Gastrocnemius medialis (tissue), 4 donors: ENCODE measurements at regions of chr2 and their contacts with region 1.

Region 1: GRCh38 chr2:72887754-72888437 is 688 bp downstream of the SPR start:
- DNase-seq: peak; percentile 75 to 88
- ATAC-seq: peak; percentile 85 to 87
- H3K4me3 ChIP-seq: peak overlapping the region; percentile 60 to 88 (median 76)
- H3K27ac ChIP-seq: peak overlapping the region; percentile 82 to 96 (median 89)
- H3K4me1 ChIP-seq: peaks cover 12 to 33% of the 10 kb centered on the region in 2 donors
- H3K27me3 ChIP-seq: no peaks in the 10 kb centered on the region
- CTCF ChIP-seq: peak; percentile 77 to 94 (median 83)
- POLR2A ChIP-seq: no peak

Region 2: DNA sequence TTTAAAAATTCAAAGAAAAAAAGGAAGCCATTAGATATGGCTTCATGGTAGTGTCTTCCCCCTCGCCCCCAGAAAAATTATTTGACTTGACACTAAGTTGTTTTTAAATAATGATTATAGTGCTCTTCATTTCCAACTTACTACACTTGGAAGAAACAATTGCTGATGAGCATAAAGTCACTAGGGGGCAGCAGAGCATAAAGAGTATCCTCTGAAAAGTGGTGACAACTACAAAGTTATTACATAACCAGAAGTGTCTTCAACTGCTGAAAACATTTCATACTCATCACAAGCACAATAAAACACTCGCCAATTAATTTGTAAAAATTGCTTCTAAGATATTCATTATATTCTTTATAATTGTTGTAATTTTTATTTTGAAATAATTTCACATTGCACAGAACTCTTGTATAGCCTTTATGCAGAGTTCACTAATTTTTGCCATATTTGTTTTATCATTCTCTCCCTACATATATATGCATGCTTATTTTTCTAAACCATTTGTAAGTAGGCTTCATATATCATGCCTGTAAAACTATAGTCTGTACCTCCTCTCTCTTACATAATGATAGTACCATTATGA is 116.9 kb before region 1 on chr2:
- in situ Hi-C with region 1: no loop called
- intact Hi-C with region 1: loop called (anchors 1 kb)
- DNase-seq: peak in 1 of 2 donors; percentile 31
- ATAC-seq: peak; percentile 58 to 85
- H3K4me3 ChIP-seq: no peak overlapping the region
- H3K27ac ChIP-seq: no peak overlapping the region
- H3K4me1 ChIP-seq: no peaks in the 10 kb centered on the region
- H3K27me3 ChIP-seq: no peaks in the 10 kb centered on the region
- CTCF ChIP-seq: peak; percentile 65 to 91 (median 85)
- POLR2A ChIP-seq: no peak

Region 3: DNA sequence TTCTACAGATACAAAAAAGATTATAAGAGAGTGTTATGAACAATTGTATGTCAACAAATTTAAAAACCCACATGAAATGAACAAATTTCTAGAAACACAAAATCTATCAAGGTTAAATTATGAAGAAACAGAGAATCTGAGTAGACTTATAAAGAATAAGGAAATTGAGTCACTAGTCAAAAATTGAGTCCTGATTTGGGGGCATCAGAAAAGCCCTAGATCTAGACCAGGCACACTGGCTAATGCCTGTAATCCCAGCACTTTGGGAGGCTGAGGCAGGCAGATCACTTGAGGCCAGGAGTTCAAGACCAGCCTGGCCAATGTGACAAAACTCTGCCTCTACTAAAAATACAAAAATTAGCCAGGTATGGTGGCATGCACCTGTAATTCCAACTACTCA is 16.0 kb before region 1 on chr2:
- in situ Hi-C with region 1: no loop called
- intact Hi-C with region 1: no loop called
- DNase-seq: no peak
- ATAC-seq: no peak
- H3K4me3 ChIP-seq: no peak overlapping the region
- H3K27ac ChIP-seq: no peak overlapping the region
- H3K4me1 ChIP-seq: no peaks in the 10 kb centered on the region
- H3K27me3 ChIP-seq: peaks cover 0 to 3% (median 0%) of the 10 kb centered on the region in 3 donors
- CTCF ChIP-seq: no peak
- POLR2A ChIP-seq: no peak

Region 4: DNA sequence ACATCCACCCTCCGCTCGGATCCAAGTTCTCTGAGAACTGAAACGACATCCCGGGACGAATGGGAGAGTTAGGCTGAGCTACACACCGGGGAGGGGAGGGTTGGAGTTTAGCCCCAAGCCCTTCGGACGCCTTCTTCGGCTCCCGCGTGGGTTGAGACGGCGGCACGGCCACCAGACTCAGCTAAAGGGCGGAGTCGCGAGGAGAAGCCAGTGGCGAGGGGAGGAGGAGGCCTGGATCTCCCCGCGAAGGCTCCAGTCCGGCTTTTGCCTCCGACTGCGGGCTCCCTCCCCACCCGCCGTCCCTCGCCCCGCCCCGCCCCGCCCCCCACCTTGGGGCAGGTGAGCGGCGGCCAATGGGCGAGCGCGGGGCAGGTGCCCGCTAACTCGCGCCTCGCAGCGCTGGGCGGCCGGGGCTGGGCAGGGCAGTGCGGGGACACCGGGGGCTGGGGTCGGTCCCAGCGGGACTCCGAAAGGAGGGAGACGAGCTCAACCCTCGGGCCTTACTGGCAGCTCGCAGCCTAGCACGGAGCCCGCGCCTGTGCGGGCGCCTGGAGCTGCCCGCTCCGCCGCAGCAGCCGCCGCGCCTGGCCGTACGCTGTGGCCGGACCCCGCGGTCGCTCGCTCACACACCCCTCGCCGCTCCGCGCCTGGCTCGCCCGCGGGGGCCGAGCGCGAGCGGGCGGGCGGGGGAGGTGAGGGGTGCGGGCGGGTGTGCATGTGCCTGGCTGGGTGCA is 29.4 kb after region 1 on chr2 and contains the start of gene EMX1:
- in situ Hi-C with region 1: no loop called
- intact Hi-C with region 1: loop called (anchors 1 kb)
- DNase-seq: peak in 1 of 2 donors; percentile 38
- ATAC-seq: peak; percentile 14 to 55
- H3K4me3 ChIP-seq: peak within 1 kb of the TSS; percentile 43 to 62 (median 48)
- H3K27ac ChIP-seq: no peak within 1 kb of the TSS
- H3K4me1 ChIP-seq: peaks cover 20 to 41% of the 10 kb centered on the region in 2 donors
- H3K27me3 ChIP-seq: peaks cover 95 to 98% (median 97%) of the 10 kb centered on the region in 3 donors
- CTCF ChIP-seq: no peak
- POLR2A ChIP-seq: no peak
- total RNA-seq, gene EMX1: not detected

Region 5: DNA sequence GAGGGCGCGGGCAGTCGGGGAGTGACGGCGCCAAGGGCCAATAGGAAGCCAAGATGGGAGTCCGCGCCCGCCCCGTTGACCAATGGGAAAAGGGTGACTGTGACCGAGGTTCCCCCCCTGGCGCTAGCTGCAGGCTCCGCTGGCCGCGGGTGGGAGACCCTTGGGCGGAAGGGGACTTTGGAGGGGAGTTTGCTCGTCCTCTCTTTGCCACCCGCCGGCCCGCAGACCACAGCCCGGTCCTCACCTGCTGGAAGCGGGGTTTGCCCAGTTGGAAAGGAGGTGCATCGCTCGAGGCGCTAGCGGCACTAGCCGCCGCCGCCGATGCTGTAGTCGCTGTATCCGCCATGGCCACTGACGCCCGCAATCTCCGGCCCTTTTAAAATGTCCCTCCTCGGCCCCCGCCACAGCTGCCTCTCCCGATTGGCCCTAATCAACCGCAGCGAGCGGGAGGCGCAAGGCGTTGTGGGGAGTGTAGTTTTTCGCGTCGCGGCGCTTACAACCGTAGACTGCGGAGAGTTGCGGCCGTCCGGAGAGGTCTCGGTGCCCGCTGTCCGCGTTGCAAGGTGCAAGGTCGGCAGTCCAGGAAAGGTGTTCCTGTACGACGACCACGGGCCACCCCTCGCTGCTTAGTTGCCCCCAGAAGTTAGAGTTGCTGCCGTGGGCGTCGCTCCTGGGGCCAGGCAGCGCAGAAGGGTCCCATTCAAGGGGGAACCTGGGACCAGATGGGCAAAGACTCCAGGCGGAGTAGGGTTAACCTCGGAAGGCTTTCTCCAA is 183.7 kb after region 1 on chr2 and contains the start of gene SFXN5:
- in situ Hi-C with region 1: no loop called
- intact Hi-C with region 1: loop called (anchors 5 kb)
- DNase-seq: peak; percentile 98
- ATAC-seq: peak; percentile 84 to 90
- H3K4me3 ChIP-seq: peak within 1 kb of the TSS; percentile 83 to 93 (median 92)
- H3K27ac ChIP-seq: peak within 1 kb of the TSS; percentile 87 to 97 (median 92)
- H3K4me1 ChIP-seq: peaks cover 19 to 48% of the 10 kb centered on the region in 2 donors
- H3K27me3 ChIP-seq: no peaks in the 10 kb centered on the region
- CTCF ChIP-seq: peak in 2 of 5 experiments; percentile 32 to 35
- POLR2A ChIP-seq: peak; percentile 24 to 59
- total RNA-seq, gene SFXN5: 6.8 to 22.7 (median 9.1) TPM

Region 6: DNA sequence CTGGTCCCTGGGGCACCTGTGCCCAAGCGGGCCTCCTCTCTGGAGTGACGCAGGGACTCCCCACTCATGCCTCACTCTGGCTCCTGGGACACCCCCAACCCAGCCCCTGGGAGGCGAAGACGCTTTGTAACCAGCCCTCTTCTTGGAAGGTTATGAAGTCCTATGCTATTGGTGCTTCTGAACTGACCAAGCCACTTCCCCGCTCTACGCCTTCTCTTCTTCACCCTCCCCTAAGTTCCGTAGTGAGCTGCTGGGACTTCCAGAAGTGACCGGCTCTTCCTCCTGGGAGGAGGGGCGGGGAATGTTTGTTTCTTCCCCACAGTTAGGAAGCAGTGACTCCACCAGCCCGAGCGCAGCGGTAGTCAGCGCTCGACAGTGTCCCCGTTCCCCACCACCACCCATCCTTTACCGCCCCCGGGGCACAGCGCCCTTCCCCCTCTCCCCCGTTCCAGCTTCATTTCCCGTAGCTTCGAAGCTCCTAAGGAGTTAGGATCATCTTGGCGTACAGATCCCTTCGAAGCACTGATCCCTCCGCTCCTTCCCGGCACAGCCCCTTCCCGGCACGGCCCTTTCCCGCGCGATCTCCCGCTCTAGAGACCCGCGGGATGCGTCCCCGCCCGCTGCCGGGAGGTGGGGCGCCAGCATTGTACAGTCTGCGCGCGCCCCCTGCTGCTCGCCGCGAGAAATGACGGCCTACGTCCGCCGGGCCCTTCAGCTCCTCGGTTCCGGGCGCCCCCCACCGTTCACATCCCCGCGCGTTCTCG is 289.2 kb after region 1 on chr2:
- in situ Hi-C with region 1: loop called in 1 of 4 experiments (anchors 25 kb)
- intact Hi-C with region 1: loop called (anchors 5 kb)
- DNase-seq: peak; percentile 69 to 77
- ATAC-seq: peak; percentile 90 to 93
- H3K4me3 ChIP-seq: peak overlapping the region; percentile 52 to 87 (median 65)
- H3K27ac ChIP-seq: peak overlapping the region; percentile 62 to 81 (median 74)
- H3K4me1 ChIP-seq: peaks cover 0 to 18% of the 10 kb centered on the region in 2 donors
- H3K27me3 ChIP-seq: peaks cover 18 to 29% (median 26%) of the 10 kb centered on the region in 3 donors
- CTCF ChIP-seq: peak; percentile 93 to 99 (median 96)
- POLR2A ChIP-seq: peak; percentile 15 to 25